Activated naive CD4-positive, alpha-beta T cell treated with anti-CD3 and anti-CD28 coated beads for 36 hours (primary cell): ENCODE measurements at regions of chr12 and their contacts with region 1.

Region 1: DNA sequence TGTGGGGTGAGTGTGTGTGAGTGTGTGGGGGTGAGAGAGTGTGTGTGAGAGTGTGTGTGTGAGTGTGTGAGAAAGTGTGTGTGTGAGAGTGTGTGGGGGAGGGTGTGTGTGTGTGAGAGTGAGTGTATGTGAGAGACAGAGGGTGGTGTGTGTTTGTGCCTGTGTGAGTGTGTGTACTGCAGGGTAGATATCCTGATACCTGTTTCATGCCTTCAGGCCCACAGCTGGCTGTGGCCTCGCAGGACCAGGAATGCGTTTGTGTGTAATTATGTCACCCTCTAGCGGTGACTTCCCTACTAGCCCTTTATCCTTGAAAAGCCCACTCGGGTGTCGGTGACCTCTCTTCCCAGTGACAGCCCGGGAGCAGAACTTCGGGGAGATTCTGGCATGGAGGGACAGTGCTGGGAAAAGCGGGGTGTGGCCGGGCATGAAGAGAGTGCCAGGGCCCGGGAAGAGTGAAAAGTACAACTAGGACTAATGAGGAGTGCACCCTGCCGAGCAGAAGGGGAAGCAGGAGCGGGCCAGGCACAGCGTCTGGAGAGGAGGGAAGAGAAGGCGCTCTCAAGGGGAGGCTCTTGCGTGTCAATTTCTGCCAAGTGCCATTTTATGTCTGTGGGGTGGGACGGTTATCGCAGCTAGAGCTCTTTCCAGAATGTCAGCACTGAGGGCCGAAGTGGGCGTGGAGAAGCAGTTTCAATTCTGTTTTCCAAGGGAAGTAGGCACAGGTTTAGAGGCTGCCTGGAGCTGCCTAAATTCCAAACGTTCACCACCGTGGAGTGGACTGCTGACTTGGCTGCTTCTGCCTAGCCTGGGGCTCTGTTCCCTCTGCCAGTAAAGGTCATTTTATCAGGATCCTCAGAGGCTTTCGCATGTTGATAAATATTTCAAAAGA is 11.0 kb upstream of the FBXL14 start:
- DNase-seq: peak; percentile 76
- H3K4me3 Mint-ChIP-seq: peak overlapping the region; percentile 76
- H3K27ac Mint-ChIP-seq: peak overlapping the region; percentile 81
- H3K4me1 Mint-ChIP-seq: peaks cover 39% of the 10 kb centered on the region
- H3K27me3 Mint-ChIP-seq: no peaks in the 10 kb centered on the region

Region 2: GRCh38 chr12:1204581-1205121 is 400.7 kb before region 1 on chr12:
- CTCF ChIA-PET with region 1: no interaction called
- intact Hi-C with region 1: loop called (anchors 10 kb)
- DNase-seq: peak; percentile 18
- H3K4me3 Mint-ChIP-seq: no peak overlapping the region
- H3K27ac Mint-ChIP-seq: no peak overlapping the region
- H3K4me1 Mint-ChIP-seq: peaks cover 9% of the 10 kb centered on the region
- H3K27me3 Mint-ChIP-seq: no peaks in the 10 kb centered on the region

Region 3: DNA sequence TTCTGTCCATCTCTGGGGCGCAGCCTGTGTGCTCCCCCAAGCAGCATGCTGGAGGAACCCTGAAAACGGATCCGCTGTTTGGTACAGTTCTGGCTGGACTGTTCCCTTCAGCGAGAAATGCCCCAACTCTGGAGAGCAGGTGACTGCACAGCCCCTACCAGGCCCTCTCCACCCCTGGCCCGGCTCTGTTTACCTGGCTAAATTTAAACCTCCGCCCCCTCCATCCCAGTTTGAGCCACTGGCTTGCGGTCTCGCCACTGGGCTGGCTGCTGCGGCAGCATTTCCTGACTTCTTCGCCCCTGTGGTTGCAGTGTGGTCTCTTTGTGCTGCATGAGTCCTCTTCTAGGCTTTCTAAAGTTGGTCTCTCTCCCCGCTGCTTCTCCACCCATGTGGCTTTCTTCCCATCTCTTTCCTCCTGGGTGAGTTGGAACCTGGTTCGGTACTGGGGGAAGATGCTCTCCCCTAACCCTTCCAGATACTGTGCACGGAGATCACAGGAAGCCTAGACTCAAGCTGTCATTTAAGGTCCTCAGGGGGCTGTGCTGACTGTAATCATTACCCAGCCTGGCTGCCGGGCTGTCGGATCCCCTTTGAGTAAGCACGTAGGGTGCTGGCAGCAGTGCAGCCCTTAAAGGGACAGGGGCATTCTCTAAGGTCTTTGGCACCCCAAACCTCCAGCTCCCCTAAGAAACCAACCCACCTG is 71.6 kb before region 1 on chr12:
- CTCF ChIA-PET with region 1: no interaction called
- intact Hi-C with region 1: loop called (anchors 2 kb)
- DNase-seq: peak; percentile 60
- H3K4me3 Mint-ChIP-seq: peak overlapping the region; percentile 63
- H3K27ac Mint-ChIP-seq: no peak overlapping the region
- H3K4me1 Mint-ChIP-seq: peaks cover 33% of the 10 kb centered on the region
- H3K27me3 Mint-ChIP-seq: peaks cover 61% of the 10 kb centered on the region

Region 4: DNA sequence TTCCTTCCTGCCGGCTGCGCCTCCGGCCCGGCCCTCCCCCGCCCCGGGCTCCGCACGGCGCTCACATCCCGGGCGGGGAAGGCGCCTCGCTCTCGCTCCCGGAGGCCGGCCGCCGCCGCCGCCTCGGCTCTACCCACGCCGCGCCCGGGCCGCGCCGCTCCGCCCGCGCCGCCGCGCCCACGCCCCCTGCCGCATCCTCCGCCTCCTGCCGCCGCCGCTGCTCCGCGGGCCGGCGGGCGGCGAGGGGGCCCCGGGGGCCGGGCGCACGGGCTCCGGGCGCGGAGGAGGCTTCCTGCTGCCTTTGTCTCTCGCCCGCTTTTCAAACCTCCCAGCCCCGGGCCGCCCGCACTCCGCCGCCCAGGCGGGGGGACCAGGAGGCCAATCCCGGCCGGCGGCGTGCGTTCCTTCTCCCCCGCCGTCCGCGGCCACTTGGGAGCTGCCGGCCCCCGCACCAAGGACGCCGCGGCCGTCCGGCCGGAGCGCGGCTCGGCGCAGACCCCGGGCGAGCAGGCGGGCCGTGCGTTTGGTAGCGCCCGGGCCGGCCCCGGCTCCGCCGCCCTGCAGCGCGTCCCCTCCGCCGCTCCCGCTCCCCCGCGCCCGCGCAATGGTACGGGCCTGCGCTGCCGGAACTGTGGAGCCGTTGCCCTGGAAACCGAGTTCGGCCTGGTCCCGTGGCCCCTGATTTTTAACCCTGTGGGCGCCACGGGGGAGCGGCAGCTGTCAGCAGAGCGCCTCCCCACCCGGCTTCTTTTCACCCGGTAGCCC is 10.9 kb before region 1 on chr12 and contains the start of gene FBXL14:
- CTCF ChIA-PET with region 1: interaction called, 6 read pairs
- intact Hi-C with region 1: loop called (anchors 1 kb)
- DNase-seq: peak; percentile 88
- H3K4me3 Mint-ChIP-seq: peak within 1 kb of the TSS; percentile 94
- H3K27ac Mint-ChIP-seq: peak within 1 kb of the TSS; percentile 88
- H3K4me1 Mint-ChIP-seq: peaks cover 39% of the 10 kb centered on the region
- H3K27me3 Mint-ChIP-seq: no peaks in the 10 kb centered on the region
- total RNA-seq, gene FBXL14: 11.4 to 11.9 TPM

Region 5: DNA sequence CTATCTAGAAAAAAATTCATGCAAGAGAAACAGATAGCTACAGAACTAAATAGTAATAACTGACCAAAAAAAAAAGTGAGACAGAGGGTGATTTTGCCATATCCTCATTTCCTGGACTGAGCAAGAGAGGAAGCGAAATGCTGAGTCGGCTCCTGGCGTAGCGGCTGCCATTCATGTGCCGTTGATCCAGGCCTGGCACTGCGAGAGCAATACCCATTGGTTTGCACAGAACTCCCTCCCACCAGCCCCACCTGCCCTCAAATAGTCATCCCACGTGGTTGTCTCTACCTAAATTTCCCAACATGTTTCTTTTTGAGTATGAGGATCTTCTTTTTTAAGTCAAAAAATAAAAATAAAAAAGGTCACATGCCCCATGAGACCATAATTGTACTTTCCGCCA is 14.2 kb after region 1 on chr12:
- CTCF ChIA-PET with region 1: no interaction called
- intact Hi-C with region 1: no loop called
- DNase-seq: peak; percentile 66
- H3K4me3 Mint-ChIP-seq: no peak overlapping the region
- H3K27ac Mint-ChIP-seq: no peak overlapping the region
- H3K4me1 Mint-ChIP-seq: peaks cover 19% of the 10 kb centered on the region
- H3K27me3 Mint-ChIP-seq: no peaks in the 10 kb centered on the region

Region 6: DNA sequence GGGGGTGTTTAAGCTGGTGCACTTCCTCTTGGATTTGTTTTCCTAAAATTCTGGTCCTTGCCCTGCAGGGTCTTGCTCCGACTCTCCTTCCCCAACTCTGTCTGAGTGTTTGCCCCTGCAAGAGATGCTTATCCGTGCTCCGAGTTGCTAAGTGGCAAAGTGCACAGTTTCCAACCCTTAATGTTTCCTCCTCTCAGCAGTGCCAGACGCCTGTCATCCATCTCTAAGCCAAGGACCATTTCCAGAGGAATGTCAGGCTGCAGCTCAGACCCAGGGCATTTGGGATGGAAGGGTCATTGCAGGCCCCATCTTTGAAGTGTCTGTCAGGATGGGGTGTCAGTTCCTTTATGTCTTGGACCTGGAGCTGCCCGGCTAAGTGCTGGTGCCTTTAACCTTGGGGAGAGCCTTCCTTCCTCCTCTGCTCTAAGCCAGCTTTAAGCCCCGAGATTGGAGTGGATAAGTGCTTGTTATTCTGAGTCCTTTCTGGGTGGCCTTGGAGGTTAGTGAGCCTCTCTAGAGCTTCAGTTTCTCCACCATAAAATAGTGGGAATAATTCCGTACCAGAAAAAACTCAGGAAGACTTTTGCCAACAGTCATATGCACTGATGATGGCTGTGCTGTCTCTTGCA is 38.6 kb after region 1 on chr12:
- CTCF ChIA-PET with region 1: no interaction called
- intact Hi-C with region 1: no loop called
- DNase-seq: no peak
- H3K4me3 Mint-ChIP-seq: no peak overlapping the region
- H3K27ac Mint-ChIP-seq: no peak overlapping the region
- H3K4me1 Mint-ChIP-seq: peaks cover 2% of the 10 kb centered on the region
- H3K27me3 Mint-ChIP-seq: no peaks in the 10 kb centered on the region

Region 7: GRCh38 chr12:1690578-1691122 is 85.3 kb after region 1 on chr12 and contains the start of gene ADIPOR2:
- CTCF ChIA-PET with region 1: no interaction called
- intact Hi-C with region 1: no loop called
- DNase-seq: peak; percentile 95
- H3K4me3 Mint-ChIP-seq: peak within 1 kb of the TSS; percentile 97
- H3K27ac Mint-ChIP-seq: peak within 1 kb of the TSS; percentile 97
- H3K4me1 Mint-ChIP-seq: peaks cover 48% of the 10 kb centered on the region
- H3K27me3 Mint-ChIP-seq: no peaks in the 10 kb centered on the region
- total RNA-seq, gene ADIPOR2: 31.1 to 34.8 TPM